ENCODE measurements at regions of chr1 and their contacts with region 1.

Region 1: DNA sequence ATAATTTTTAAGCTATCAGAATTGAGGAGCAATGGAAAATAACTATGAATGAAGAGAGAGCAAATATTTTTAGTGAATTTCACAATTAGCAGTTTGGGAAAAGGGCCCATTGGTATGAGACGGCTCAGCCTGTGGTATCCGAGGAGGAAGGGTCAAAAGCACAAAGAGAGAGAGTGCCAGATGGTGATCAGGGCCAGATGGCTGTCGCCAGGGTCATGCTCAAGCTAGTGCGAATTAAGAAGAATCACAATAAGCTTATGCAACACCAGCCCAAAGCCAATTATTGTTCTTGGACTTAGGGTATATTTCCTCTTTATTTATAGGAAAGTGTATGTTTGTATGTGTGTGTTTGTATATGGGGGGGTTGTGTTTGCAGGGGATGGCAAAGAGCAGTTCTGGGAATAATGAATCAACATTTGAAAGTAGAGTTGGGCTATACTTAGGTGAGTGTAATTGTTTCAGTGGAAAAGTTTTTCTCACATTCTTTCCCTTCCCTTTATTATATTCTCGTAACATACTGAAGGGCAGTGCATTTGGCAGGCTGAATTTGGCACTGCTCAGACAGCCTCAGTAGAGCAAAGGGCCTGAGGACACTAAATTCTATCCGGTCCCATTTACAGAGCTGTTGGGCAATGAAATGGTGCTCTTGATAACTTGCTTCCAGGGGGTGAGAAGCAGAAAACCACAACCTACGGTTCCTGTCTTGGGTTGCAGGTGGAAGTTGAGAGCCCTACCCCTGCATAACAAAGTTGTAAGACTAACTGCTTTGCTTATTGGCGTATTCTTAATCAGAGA is 19.5 kb upstream of the DDR2 start:
- DNase-seq: no peak
- H3K27ac ChIP-seq: no peak overlapping the region
- CTCF ChIP-seq: no peak

Region 2: DNA sequence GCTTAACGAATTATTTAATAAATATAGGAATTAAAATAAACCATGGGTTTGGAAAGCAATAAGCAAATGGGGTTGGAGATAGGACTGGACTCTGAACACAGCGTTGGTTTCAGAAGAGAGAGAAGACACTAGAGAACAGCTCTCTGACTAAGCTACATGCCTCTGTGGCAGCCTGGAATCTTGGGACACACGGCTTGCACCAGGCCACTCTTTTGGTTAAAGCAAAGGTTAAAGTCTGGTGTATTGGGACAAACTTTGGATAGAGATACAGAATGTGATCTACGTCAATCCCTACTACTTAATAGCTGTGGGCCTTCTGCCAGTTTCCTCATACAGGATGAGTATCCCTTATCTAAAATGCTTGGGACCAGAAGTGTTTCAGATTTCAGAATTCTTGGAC is 128.0 kb after region 1 on chr1:
- CTCF ChIA-PET with region 1: no interaction called
- POLR2A ChIA-PET with region 1: no interaction called
- DNase-seq: no peak
- H3K27ac ChIP-seq: no peak overlapping the region
- CTCF ChIP-seq: no peak

Region 3: DNA sequence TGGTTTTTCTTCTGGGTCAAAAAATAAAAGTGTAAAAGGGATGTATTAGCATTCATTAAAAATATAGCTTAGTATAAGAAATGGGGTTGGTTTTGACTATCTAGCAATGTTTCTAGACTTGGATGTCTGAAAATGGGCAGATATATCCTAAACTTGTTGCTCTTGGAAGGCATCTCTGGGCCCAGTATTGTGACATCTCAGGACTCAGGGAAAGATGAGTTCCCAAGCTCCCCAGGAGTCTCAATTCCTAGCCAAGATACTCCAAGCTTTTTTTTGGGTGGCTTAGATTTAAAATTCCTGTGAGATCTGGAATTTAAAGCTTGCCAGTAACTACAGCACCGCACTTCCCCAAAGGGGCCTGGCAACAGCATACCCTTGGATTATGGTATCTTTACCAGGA is 166.2 kb after region 1 on chr1:
- CTCF ChIA-PET with region 1: interaction called, 10 read pairs
- POLR2A ChIA-PET with region 1: no interaction called
- DNase-seq: no peak
- H3K27ac ChIP-seq: no peak overlapping the region
- CTCF ChIP-seq: no peak